ENCODE measurements at regions of chr10 and their contacts with region 1.

Region 1: GRCh38 chr10:30751678-30752331 is 122.3 kb upstream of the LYZL2 start:
- DNase-seq: peak; percentile 47 to 82 (median 63)
- H3K4me3 ChIP-seq: no peak overlapping the region
- H3K4me3 Mint-ChIP-seq: peak overlapping the region in 6 of 7 donors; percentile 26 to 59 (median 47)
- H3K27ac ChIP-seq: no peak overlapping the region
- H3K27ac Mint-ChIP-seq: peak overlapping the region in 6 of 8 donors; percentile 49 to 89 (median 77)
- H3K4me1 ChIP-seq: peaks cover 14% of the 10 kb centered on the region
- H3K4me1 Mint-ChIP-seq: peaks cover 48 to 53% (median 48%) of the 10 kb centered on the region in 3 donors
- H3K27me3 ChIP-seq: no peaks in the 10 kb centered on the region
- H3K27me3 Mint-ChIP-seq: peaks cover 0 to 5% of the 10 kb centered on the region in 2 donors

Region 2: GRCh38 chr10:29757551-29758297 is 994.1 kb before region 1 on chr10:
- CTCF ChIA-PET with region 1: no interaction called
- POLR2A ChIA-PET with region 1: no interaction called
- DNase-seq: no peak
- H3K4me3 ChIP-seq: no peak overlapping the region
- H3K4me3 Mint-ChIP-seq: no peak overlapping the region
- H3K27ac ChIP-seq: no peak overlapping the region
- H3K27ac Mint-ChIP-seq: no peak overlapping the region
- H3K4me1 ChIP-seq: no peaks in the 10 kb centered on the region
- H3K4me1 Mint-ChIP-seq: no peaks in the 10 kb centered on the region
- H3K27me3 ChIP-seq: no peaks in the 10 kb centered on the region
- H3K27me3 Mint-ChIP-seq: peaks cover 5 to 19% of the 10 kb centered on the region in 2 donors

Region 3: GRCh38 chr10:30722956-30723620 is 28.7 kb before region 1 on chr10:
- CTCF ChIA-PET with region 1: interaction called, 11 read pairs
- POLR2A ChIA-PET with region 1: no interaction called
- DNase-seq: no peak
- H3K4me3 ChIP-seq: no peak overlapping the region
- H3K4me3 Mint-ChIP-seq: no peak overlapping the region
- H3K27ac ChIP-seq: no peak overlapping the region
- H3K27ac Mint-ChIP-seq: peak overlapping the region in 1 of 8 donors; percentile 72
- H3K4me1 ChIP-seq: no peaks in the 10 kb centered on the region
- H3K4me1 Mint-ChIP-seq: peaks cover 0 to 9% (median 2%) of the 10 kb centered on the region in 3 donors
- H3K27me3 ChIP-seq: no peaks in the 10 kb centered on the region
- H3K27me3 Mint-ChIP-seq: peaks cover 0 to 1% of the 10 kb centered on the region in 2 donors

Region 4: GRCh38 chr10:30765616-30766015 is 13.8 kb after region 1 on chr10:
- CTCF ChIA-PET with region 1: interaction called, 15 read pairs
- POLR2A ChIA-PET with region 1: no interaction called
- DNase-seq: no peak
- H3K4me3 ChIP-seq: no peak overlapping the region
- H3K4me3 Mint-ChIP-seq: no peak overlapping the region
- H3K27ac ChIP-seq: no peak overlapping the region
- H3K27ac Mint-ChIP-seq: no peak overlapping the region
- H3K4me1 ChIP-seq: no peaks in the 10 kb centered on the region
- H3K4me1 Mint-ChIP-seq: no peaks in the 10 kb centered on the region
- H3K27me3 ChIP-seq: no peaks in the 10 kb centered on the region
- H3K27me3 Mint-ChIP-seq: no peaks in the 10 kb centered on the region

Region 5: GRCh38 chr10:30812018-30812851 is 60.4 kb after region 1 on chr10:
- CTCF ChIA-PET with region 1: no interaction called
- POLR2A ChIA-PET with region 1: no interaction called
- DNase-seq: no peak
- H3K4me3 ChIP-seq: no peak overlapping the region
- H3K4me3 Mint-ChIP-seq: peak overlapping the region in 5 of 7 donors; percentile 36 to 60 (median 57)
- H3K27ac ChIP-seq: no peak overlapping the region
- H3K27ac Mint-ChIP-seq: peak overlapping the region in 3 of 8 donors; percentile 44 to 83 (median 67)
- H3K4me1 ChIP-seq: peaks cover 4% of the 10 kb centered on the region
- H3K4me1 Mint-ChIP-seq: peaks cover 26 to 30% (median 28%) of the 10 kb centered on the region in 3 donors
- H3K27me3 ChIP-seq: no peaks in the 10 kb centered on the region
- H3K27me3 Mint-ChIP-seq: no peaks in the 10 kb centered on the region

Region 6: GRCh38 chr10:31770307-31770902 is 1018.6 kb after region 1 on chr10:
- CTCF ChIA-PET with region 1: interaction called, 25 read pairs
- POLR2A ChIA-PET with region 1: no interaction called
- DNase-seq: peak; percentile 34 to 70 (median 40)
- H3K4me3 ChIP-seq: no peak overlapping the region
- H3K4me3 Mint-ChIP-seq: no peak overlapping the region
- H3K27ac ChIP-seq: no peak overlapping the region
- H3K27ac Mint-ChIP-seq: no peak overlapping the region
- H3K4me1 ChIP-seq: no peaks in the 10 kb centered on the region
- H3K4me1 Mint-ChIP-seq: no peaks in the 10 kb centered on the region
- H3K27me3 ChIP-seq: no peaks in the 10 kb centered on the region
- H3K27me3 Mint-ChIP-seq: no peaks in the 10 kb centered on the region

Region 7: GRCh38 chr10:31808258-31809218 is 1056.7 kb after region 1 on chr10:
- CTCF ChIA-PET with region 1: interaction called, 10 read pairs
- POLR2A ChIA-PET with region 1: no interaction called
- DNase-seq: peak in 2 of 5 donors; percentile 42 to 46
- H3K4me3 ChIP-seq: no peak overlapping the region
- H3K4me3 Mint-ChIP-seq: peak overlapping the region in 2 of 7 donors; percentile 39 to 64
- H3K27ac ChIP-seq: no peak overlapping the region
- H3K27ac Mint-ChIP-seq: peak overlapping the region; percentile 43 to 92 (median 86)
- H3K4me1 ChIP-seq: peaks cover 4% of the 10 kb centered on the region
- H3K4me1 Mint-ChIP-seq: peaks cover 4 to 7% (median 6%) of the 10 kb centered on the region in 3 donors
- H3K27me3 ChIP-seq: no peaks in the 10 kb centered on the region
- H3K27me3 Mint-ChIP-seq: no peaks in the 10 kb centered on the region

Measured in CD8-positive, alpha-beta memory T cell (primary cell).